ENCODE measurements at regions of chr16 and their contacts with region 1.

Region 1: DNA sequence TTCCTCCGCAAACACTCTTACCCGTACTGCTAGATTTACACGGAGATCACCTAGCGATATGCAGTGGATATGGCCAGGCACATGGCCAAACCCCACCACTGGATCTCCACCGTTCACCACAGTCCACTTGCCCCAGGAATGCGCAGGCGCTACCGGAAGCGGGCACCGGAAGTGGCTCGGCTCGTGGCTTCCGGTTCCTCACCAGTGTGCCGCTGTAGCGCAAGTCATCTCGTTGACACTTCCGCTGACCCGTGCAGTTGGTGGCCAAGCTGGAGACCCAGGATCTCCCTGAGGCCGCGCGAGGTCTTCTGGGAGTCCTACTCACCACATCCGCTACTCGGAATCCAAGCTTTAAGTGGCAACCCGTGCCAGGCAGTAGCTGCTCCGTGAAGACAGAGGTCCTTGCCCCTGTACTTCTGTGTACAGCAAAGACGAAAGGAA is 11.5 kb downstream of the ZNF597 start:
- DNase-seq: peak; percentile 75
- ATAC-seq: peak; percentile 72

Region 2: GRCh38 chr16:3383045-3383448 is 48.8 kb before region 1 on chr16:
- intact Hi-C with region 1: loop called (anchors 10 kb)
- DNase-seq: no peak
- ATAC-seq: no peak

Measured in Right ventricle myocardium superior (tissue), 1 donor.